Activated naive CD4-positive, alpha-beta T cell treated with anti-CD3 and anti-CD28 coated beads for 36 hours (primary cell): ENCODE measurements at regions of chr19 and their contacts with region 1.

Region 1: DNA sequence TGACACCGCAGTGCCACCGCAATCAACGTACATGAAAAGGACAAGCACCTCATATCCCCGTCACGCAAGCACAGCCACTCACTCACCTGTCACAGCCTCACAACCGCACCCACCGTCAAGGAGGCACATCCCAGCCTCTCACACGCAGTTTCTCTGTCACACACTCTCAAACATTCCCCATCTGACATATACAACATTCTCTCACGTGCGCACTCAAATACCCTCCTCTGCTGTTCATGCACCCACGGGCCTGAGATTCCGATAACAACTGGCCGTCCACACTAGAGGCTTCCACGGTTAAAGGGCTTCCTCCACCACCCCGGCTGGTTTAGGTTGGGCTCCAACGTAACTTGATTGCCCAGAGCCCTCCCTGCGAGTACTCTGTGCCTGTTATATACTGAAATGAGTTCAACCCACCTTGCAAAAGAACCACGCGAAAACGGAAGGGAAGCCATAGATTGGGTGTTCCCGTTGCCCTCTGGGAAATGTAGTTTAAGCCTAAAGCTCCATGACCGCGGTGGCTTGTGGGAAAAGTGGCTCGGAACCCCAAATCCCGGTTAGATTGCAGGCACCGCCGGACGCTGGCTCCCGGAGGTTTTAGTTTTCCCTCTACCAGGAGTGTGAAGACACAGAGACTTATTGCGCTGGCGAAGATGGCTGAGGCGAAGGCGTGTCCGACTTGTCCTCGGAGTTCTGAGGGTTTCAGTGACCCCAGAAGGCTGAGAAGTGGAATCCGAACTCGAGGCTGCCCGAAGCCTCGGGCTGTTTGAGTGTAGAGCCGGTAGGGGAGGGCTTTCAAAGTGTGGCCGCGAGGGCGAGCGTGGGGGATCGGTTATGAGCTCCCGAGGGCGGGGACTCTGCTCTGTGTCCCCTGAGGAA is at the start of gene ZNF573:
- DNase-seq: peak; percentile 91
- H3K4me3 Mint-ChIP-seq: peak within 1 kb of the TSS; percentile 96
- H3K27ac Mint-ChIP-seq: peak within 1 kb of the TSS; percentile 99
- H3K4me1 Mint-ChIP-seq: peaks cover 25% of the 10 kb centered on the region
- H3K27me3 Mint-ChIP-seq: no peaks in the 10 kb centered on the region
- total RNA-seq, gene ZNF573: 6.1 to 7.3 TPM

Region 2: DNA sequence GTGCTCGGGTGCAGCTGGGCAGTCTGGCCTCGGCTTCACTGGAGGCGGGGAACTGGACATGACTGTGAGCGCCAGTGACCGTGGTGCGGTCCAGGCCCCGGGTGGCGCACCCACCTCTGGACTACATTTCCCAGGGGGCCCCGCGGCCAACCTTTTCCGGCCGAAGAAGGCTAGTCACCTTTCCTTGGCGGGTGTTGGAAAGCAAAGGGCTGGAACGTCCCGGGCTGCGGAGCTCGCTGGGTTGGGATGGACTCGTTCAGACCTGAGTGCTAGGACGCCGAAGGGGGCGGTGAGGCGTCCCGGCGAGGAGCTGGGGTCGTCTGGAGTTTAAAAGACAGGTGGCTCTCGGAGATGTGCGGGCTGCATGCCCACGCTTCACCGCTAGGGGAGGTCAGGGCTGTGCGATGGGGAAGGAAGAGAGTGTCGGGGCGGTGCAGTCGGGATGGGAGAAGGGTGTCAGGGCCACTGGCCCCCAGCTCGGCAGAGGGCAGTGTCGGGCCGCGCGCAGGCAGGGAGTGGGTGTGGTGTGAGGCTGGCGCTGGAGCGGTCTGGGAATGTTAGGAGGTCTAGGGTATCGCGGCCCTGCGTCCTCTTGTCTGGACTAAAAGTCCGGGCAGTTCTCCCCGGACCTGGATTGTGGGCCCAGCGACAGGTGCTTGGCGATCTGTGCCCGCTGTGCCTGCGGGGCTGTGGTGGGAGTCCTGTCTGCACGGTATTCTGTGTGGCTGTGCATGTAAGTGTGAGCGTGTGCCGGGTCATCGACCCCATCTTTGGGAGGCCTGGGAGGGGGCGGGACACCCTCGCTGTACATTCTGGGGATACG is 806.1 kb before region 1 on chr19:
- CTCF ChIA-PET with region 1: no interaction called
- intact Hi-C with region 1: loop called (anchors 1 kb)
- DNase-seq: peak; percentile 91
- H3K4me3 Mint-ChIP-seq: peak overlapping the region; percentile 92
- H3K27ac Mint-ChIP-seq: peak overlapping the region; percentile 95
- H3K4me1 Mint-ChIP-seq: peaks cover 11% of the 10 kb centered on the region
- H3K27me3 Mint-ChIP-seq: no peaks in the 10 kb centered on the region

Region 3: GRCh38 chr19:37506387-37507166 is 272.8 kb before region 1 on chr19 and contains the start of gene ZNF793:
- CTCF ChIA-PET with region 1: no interaction called
- intact Hi-C with region 1: loop called (anchors 1 kb)
- DNase-seq: peak; percentile 85
- H3K4me3 Mint-ChIP-seq: no peak within 1 kb of the TSS
- H3K27ac Mint-ChIP-seq: no peak within 1 kb of the TSS
- H3K4me1 Mint-ChIP-seq: no peaks in the 10 kb centered on the region
- H3K27me3 Mint-ChIP-seq: no peaks in the 10 kb centered on the region
- total RNA-seq, gene ZNF793: 3.8 to 3.9 TPM

Region 4: GRCh38 chr19:37655689-37656371 is 123.5 kb before region 1 on chr19:
- CTCF ChIA-PET with region 1: no interaction called
- intact Hi-C with region 1: loop called (anchors 1 kb)
- DNase-seq: peak; percentile 87
- H3K4me3 Mint-ChIP-seq: peak overlapping the region; percentile 93
- H3K27ac Mint-ChIP-seq: peak overlapping the region; percentile 93
- H3K4me1 Mint-ChIP-seq: peaks cover 29% of the 10 kb centered on the region
- H3K27me3 Mint-ChIP-seq: no peaks in the 10 kb centered on the region

Region 5: DNA sequence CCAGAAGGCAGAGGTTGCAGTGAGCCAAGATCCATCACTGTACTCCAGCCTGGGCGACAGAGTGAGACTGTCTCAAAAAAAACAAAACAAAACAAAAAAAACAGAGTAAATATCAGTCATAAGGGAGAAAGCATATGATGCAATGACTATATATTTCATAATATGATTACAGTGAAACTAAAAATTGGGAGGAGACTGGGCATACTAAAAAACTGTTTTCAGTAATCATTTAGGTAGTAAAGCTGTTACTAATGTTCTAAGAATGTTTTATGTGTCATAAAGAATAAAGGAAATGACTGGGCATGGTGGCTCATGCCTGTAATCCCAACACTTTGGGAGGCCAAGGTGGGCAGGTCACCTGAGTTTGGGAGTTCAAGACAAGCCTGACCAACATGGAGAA is 15.9 kb before region 1 on chr19:
- CTCF ChIA-PET with region 1: no interaction called
- intact Hi-C with region 1: loop called (anchors 1 kb)
- DNase-seq: peak; percentile 30
- H3K4me3 Mint-ChIP-seq: no peak overlapping the region
- H3K27ac Mint-ChIP-seq: peak overlapping the region; percentile 70
- H3K4me1 Mint-ChIP-seq: peaks cover 2% of the 10 kb centered on the region
- H3K27me3 Mint-ChIP-seq: no peaks in the 10 kb centered on the region

Region 6: GRCh38 chr19:38315657-38316476 is 536.5 kb after region 1 on chr19 and contains the start of gene YIF1B:
- CTCF ChIA-PET with region 1: no interaction called
- intact Hi-C with region 1: loop called (anchors 5 kb)
- DNase-seq: peak; percentile 98
- H3K4me3 Mint-ChIP-seq: peak within 1 kb of the TSS; percentile 89
- H3K27ac Mint-ChIP-seq: peak within 1 kb of the TSS; percentile 92
- H3K4me1 Mint-ChIP-seq: peaks cover 50% of the 10 kb centered on the region
- H3K27me3 Mint-ChIP-seq: no peaks in the 10 kb centered on the region
- total RNA-seq, gene YIF1B: 56.0 to 61.1 TPM